AG04449 (cell line): ENCODE measurements at regions of chr2 and their contacts with region 1.

Region 1: GRCh38 chr2:55961318-55961911 is 37.8 kb upstream of the EFEMP1 start:
- DNase-seq: no peak
- H3K4me3 ChIP-seq: no peak overlapping the region
- CTCF ChIP-seq: peak; percentile 55

Region 2: DNA sequence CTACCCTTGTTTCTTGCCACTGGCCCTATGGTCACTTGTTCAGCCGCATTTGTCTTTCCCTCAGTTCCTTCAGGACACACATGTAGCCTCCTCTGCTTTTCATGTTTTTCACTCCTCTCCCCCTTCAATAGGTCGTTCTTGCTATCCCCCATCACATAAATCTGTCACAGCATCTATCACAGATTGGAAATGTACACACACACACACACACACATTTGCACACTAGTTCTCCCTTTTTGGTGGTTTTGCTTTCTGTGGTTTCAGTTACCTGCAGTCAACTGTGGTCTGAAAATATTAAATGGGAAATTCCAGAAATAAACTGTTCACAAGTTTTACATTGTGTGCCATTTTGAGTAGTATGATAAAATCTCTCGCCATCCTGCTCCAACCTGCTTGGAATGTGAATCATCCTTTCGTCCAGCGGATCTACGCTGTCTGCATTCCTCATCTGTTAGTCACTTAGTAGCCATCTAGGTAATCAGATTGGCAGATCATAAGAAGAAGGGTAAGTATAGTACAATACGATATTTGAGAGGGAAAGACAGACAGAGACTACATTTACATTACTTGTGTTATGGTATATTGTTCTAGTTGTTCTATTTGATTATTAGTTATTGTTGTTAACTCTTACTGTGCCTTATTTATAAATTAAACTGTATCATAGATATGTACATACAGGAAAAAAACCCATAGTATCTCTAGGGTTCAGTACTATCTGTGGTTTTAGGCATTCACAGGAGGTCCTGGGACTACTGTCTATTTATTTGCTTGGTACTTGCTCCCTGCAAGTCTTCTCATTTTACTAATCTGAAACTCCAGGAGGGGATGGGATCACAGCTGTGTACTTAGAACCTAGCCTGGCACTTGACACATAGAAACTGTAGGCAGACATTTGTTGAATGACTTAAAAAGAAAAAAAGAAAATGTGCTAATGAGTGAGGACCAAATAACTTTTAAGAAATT is 181.7 kb before region 1 on chr2:
- CTCF ChIA-PET with region 1: interaction called, 17 read pairs
- POLR2A ChIA-PET with region 1: no interaction called
- DNase-seq: no peak
- H3K4me3 ChIP-seq: no peak overlapping the region
- CTCF ChIP-seq: no peak

Region 3: DNA sequence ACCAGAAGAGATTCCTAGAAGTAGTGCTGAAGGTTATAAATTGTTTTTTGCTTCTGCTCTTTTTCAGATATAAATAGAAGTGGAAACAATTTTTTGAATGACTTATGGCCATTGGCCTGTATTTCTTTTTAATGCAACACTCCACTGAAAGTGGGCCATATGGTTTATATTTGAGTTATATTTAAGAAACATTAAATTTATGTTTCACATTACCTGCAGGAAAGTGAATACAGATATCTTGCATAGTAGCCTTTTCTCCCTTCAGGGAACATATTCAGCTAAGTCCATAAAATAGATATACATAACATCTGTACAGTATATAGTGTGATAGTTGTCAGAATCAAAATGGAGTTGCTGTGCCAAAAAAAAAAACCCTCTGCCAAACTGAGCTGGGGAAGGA is 15.3 kb after region 1 on chr2:
- CTCF ChIA-PET with region 1: interaction called, 50 read pairs
- POLR2A ChIA-PET with region 1: no interaction called
- DNase-seq: no peak
- H3K4me3 ChIP-seq: no peak overlapping the region
- CTCF ChIP-seq: no peak

Region 4: DNA sequence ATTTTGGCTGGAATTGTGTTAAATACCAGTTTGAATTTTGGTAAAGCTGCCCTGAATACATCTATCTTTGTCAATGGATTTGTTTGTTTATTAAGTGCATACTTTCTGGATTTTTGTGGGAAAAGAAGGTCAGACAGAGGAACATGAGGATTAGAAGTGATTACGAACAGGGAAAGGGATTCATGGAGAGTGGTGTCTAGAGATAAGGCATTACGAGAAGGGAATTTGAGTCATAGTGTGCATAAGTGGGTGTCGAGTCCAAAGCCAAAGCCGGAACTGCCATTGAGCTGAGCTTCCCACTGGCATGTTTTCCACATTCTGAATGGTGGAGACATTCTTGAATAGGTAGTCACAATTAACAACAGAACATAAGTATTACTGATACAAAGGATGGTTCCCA is 31.1 kb after region 1 on chr2:
- CTCF ChIA-PET with region 1: interaction called, 22 read pairs
- POLR2A ChIA-PET with region 1: no interaction called
- DNase-seq: peak; percentile 100
- H3K4me3 ChIP-seq: no peak overlapping the region
- CTCF ChIP-seq: no peak

Region 5: DNA sequence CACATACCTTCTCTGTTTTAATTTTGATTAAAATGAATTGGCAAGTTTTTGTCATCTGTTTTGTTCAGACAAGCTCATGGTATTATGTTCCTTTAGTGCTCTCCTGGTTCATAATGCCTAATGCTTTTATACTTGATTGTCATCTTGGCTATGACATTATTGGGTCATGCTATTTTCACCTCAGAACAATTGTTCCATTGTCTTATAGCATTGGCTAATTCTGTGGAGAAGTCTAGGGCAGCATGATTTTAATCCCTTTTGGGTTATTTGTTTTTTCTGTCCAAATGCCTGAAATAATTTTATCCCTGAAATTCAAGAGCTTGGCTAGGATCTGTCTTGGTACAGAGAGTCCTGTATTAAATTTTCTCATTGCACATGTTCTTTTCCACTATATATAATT is 138.5 kb after region 1 on chr2:
- CTCF ChIA-PET with region 1: no interaction called
- POLR2A ChIA-PET with region 1: no interaction called
- DNase-seq: no peak
- H3K4me3 ChIP-seq: no peak overlapping the region
- CTCF ChIP-seq: no peak

Region 6: DNA sequence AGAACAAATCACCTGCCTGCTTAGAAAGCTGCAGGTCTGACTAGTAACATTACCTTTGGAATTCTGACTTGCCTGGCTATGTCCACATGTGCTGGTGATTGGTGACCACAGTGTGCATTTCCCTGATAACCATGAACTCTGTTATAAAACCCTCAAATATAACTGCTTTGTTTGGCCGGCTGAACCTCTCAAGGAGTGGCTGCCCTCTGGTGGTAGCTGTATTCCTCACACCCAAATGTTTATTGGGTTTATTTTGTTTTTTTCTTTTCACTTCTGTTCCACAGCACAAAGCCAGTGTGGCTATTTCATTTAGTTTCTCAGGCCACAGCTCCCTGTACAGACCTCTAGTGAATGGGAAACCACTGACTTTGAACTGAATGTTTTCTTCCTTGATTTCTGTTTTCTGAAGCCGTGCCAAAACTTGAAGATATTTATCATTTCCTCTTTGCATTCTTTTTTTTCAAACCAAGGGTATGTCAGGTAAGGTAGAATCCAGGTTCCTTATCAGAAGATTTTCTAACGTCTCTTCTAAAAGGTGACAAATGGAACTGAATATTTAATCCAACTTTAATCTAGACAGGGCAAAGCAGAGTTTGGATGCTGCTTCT is 1536.2 kb after region 1 on chr2:
- CTCF ChIA-PET with region 1: no interaction called
- POLR2A ChIA-PET with region 1: no interaction called
- DNase-seq: peak; percentile 4
- H3K4me3 ChIP-seq: no peak overlapping the region
- CTCF ChIP-seq: peak; percentile 78